ENCODE measurements at regions of chr3 and their contacts with region 1.

Region 1: GRCh38 chr3:13452490-13453335 is 27.4 kb upstream of the HDAC11 start:
- DNase-seq: peak; percentile 61
- ATAC-seq: peak; percentile 25
- H3K4me3 Mint-ChIP-seq: peak overlapping the region; percentile 82
- H3K27ac Mint-ChIP-seq: peak overlapping the region; percentile 89
- H3K4me1 Mint-ChIP-seq: peaks cover 13% of the 10 kb centered on the region
- H3K27me3 Mint-ChIP-seq: no peaks in the 10 kb centered on the region
- CTCF ChIP-seq: peak; percentile 78

Region 2: DNA sequence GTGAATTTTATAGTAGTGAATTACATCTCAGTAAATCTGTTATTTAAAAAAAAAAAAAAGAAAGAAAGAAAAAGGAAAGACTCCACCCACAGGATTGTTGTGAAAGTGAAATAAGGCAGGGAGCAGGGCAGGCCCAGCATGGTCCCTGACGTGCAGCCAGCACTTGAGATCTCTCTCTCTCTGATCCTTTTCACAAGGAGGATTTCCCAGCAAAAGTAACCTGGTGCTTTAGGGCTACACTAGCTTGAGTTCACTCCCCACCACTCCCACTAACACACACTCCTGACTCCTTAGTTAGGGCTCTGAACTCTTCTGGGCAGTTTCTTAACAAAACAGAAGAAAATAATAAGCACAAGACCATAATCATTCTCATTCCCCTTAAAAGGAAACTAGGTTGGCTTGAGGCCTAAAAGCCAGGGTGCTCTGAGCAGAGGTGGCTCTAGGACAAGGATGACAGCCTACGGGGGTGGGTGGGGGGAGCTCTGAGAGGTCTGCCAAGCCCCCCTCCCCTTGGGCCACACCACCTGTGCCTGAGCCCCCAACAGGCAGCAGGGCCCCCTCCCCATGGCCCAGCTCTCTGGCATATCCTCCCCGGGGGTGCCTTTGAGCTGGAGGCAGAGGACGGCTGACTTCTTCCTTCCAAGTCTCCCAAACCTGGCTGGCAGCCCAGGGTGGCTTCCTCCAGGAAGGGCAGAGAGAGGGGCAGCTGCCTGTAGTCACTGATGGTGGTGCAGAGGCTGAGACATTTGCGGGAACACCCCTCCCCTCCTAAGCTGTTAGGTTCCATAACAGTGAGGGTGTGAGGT is 694.5 kb before region 1 on chr3:
- CTCF ChIA-PET with region 1: no interaction called
- POLR2A ChIA-PET with region 1: no interaction called
- intact Hi-C with region 1: no loop called
- DNase-seq: no peak
- ATAC-seq: no peak
- H3K4me3 Mint-ChIP-seq: no peak overlapping the region
- H3K27ac Mint-ChIP-seq: peak overlapping the region; percentile 25
- H3K4me1 Mint-ChIP-seq: peaks cover 9% of the 10 kb centered on the region
- H3K27me3 Mint-ChIP-seq: peaks cover 8% of the 10 kb centered on the region
- CTCF ChIP-seq: no peak

Region 3: DNA sequence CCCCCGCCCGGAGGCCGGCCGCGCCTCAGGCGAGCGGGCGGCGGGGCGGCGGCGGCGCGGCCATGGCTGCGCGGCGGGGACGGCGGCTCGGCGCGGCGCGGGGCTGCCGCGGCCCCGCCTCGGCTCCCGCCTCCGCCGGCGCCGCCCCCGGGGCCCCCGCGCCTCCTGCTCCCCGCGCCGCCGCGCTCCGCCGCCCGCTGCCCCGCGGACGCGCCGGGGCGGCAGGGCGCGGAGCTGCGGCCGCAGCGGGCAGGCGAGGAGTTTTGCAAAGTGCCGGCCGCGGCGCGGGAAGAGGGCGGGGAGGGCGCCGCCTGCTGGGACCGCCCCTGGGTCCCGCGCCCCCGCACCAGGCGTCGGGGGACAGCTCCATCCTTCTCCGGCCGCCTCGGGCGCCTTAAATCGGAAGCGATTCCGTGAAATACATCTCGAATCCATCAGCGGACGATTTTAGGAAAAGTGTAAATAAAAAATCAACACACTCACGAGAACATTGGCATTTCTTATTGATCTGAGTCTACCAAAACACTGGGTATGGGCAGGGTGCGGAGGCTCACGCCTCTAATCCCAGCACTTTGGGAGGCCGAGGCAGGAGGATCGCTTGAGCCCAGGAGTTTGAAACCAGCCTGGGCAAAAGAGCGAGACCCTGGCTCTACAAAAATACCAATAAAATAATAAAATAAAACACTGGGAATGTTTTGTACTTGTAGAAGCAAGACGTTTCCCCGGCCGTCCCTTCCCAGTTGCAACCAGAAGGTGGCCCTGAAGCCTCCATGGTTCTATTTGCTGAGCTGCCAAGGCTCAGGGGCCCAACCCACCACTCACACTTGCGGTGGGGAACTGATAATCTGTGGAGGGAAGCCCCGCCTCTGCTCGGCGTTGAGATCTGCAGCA is 169.5 kb before region 1 on chr3:
- CTCF ChIA-PET with region 1: interaction called, 11 read pairs
- POLR2A ChIA-PET with region 1: no interaction called
- intact Hi-C with region 1: no loop called
- DNase-seq: peak; percentile 28
- ATAC-seq: peak; percentile 71
- H3K4me3 Mint-ChIP-seq: peak overlapping the region; percentile 59
- H3K27ac Mint-ChIP-seq: no peak overlapping the region
- H3K4me1 Mint-ChIP-seq: peaks cover 3% of the 10 kb centered on the region
- H3K27me3 Mint-ChIP-seq: peaks cover 40% of the 10 kb centered on the region
- CTCF ChIP-seq: no peak

Region 4: DNA sequence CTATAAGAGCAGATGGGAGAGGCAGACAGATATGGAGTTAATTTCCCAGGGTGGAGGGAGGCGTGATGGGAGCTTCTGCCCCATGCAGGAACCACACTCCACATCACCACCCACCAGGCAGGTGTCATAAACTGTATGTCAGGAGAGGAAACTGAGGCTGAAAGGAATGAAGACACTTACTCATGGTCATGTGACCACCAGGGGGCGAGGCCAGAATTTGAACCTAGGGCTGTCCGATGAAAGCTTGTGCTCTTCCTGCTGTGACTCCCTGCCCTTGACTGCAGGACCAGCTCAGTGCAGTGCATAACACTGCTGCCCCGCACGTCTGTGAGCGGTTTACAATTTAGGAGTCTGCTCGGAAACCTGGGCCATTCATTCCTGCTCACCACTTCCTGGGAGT is 61.4 kb before region 1 on chr3:
- CTCF ChIA-PET with region 1: interaction called, 35 read pairs
- POLR2A ChIA-PET with region 1: no interaction called
- intact Hi-C with region 1: loop called (anchors 10 kb)
- DNase-seq: peak; percentile 25
- ATAC-seq: no peak
- H3K4me3 Mint-ChIP-seq: no peak overlapping the region
- H3K27ac Mint-ChIP-seq: no peak overlapping the region
- H3K4me1 Mint-ChIP-seq: peaks cover 3% of the 10 kb centered on the region
- H3K27me3 Mint-ChIP-seq: no peaks in the 10 kb centered on the region
- CTCF ChIP-seq: peak; percentile 37

Region 5: GRCh38 chr3:13414040-13414729 is 38.5 kb before region 1 on chr3:
- CTCF ChIA-PET with region 1: interaction called, 125 read pairs
- POLR2A ChIA-PET with region 1: interaction called, 35 read pairs
- intact Hi-C with region 1: no loop called
- DNase-seq: peak; percentile 86
- ATAC-seq: peak; percentile 90
- H3K4me3 Mint-ChIP-seq: peak overlapping the region; percentile 90
- H3K27ac Mint-ChIP-seq: peak overlapping the region; percentile 96
- H3K4me1 Mint-ChIP-seq: peaks cover 48% of the 10 kb centered on the region
- H3K27me3 Mint-ChIP-seq: no peaks in the 10 kb centered on the region
- CTCF ChIP-seq: no peak

Region 6: GRCh38 chr3:13427662-13428603 is 24.8 kb before region 1 on chr3:
- CTCF ChIA-PET with region 1: interaction called, 19 read pairs
- POLR2A ChIA-PET with region 1: interaction called, 4 read pairs
- intact Hi-C with region 1: no loop called
- DNase-seq: peak; percentile 48
- ATAC-seq: peak; percentile 85
- H3K4me3 Mint-ChIP-seq: peak overlapping the region; percentile 20
- H3K27ac Mint-ChIP-seq: peak overlapping the region; percentile 84
- H3K4me1 Mint-ChIP-seq: peaks cover 30% of the 10 kb centered on the region
- H3K27me3 Mint-ChIP-seq: no peaks in the 10 kb centered on the region
- CTCF ChIP-seq: no peak

Region 7: DNA sequence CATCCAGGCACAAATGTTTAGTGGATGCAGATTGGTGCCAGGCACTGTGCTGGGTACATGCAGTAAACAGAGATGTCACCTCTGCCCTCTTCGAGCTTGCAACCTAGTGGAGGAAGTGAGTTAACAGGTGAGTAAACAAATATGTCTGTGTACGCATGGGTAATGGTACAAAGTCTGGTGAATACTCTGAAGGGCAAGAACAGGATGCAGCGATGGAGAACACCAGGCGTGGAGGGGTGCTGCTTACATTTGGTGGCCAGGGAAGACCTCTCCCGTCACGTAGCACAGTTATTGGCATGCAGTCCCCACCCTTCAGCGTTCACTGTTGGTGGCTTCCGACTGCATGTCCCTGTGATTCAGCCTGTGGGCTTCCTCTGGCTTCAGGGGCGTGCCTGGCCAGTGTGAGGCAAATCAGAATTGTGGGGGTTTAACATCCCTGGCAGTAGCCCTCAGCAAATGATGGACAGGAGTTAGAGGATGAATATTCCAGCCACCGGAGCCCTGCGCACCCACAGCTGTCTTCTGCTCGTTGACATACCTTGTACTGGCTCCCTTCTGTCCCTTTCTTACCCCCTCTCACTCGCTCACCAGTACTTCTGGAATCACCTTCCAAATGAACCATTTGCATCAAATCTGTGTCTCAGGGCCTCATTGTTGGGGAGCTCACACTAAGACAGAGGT is 18.3 kb after region 1 on chr3:
- CTCF ChIA-PET with region 1: interaction called, 12 read pairs
- POLR2A ChIA-PET with region 1: no interaction called
- intact Hi-C with region 1: no loop called
- DNase-seq: no peak
- ATAC-seq: no peak
- H3K4me3 Mint-ChIP-seq: no peak overlapping the region
- H3K27ac Mint-ChIP-seq: no peak overlapping the region
- H3K4me1 Mint-ChIP-seq: no peaks in the 10 kb centered on the region
- H3K27me3 Mint-ChIP-seq: no peaks in the 10 kb centered on the region
- CTCF ChIP-seq: no peak

Region 8: DNA sequence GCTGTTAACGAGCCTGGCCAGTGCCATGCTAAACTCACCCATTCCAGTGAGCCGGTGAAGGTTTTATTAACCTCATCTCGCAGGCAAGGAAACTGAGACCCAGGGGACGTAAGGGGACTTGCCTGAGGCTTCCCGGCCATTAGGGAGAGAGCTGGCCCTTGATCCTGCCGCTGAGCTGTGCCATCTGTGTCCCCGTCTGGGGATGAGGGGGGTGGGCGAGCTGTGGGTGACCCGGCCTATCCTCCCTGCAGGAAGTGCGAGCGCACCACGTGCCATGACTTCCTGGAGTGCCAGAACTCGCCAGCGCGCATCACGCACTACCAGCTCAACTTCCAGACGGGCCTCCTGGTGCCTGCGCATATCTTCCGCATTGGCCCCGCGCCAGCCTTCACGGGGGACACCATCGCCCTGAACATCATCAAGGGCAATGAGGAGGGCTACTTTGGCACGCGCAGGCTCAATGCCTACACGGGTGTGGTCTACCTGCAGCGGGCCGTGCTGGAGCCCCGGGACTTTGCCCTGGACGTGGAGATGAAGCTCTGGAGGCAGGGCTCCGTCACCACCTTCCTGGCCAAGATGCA is 184.7 kb after region 1 on chr3:
- CTCF ChIA-PET with region 1: no interaction called
- POLR2A ChIA-PET with region 1: no interaction called
- intact Hi-C with region 1: no loop called
- DNase-seq: no peak
- ATAC-seq: no peak
- H3K4me3 Mint-ChIP-seq: no peak overlapping the region
- H3K27ac Mint-ChIP-seq: no peak overlapping the region
- H3K4me1 Mint-ChIP-seq: no peaks in the 10 kb centered on the region
- H3K27me3 Mint-ChIP-seq: no peaks in the 10 kb centered on the region
- CTCF ChIP-seq: no peak

Region 9: DNA sequence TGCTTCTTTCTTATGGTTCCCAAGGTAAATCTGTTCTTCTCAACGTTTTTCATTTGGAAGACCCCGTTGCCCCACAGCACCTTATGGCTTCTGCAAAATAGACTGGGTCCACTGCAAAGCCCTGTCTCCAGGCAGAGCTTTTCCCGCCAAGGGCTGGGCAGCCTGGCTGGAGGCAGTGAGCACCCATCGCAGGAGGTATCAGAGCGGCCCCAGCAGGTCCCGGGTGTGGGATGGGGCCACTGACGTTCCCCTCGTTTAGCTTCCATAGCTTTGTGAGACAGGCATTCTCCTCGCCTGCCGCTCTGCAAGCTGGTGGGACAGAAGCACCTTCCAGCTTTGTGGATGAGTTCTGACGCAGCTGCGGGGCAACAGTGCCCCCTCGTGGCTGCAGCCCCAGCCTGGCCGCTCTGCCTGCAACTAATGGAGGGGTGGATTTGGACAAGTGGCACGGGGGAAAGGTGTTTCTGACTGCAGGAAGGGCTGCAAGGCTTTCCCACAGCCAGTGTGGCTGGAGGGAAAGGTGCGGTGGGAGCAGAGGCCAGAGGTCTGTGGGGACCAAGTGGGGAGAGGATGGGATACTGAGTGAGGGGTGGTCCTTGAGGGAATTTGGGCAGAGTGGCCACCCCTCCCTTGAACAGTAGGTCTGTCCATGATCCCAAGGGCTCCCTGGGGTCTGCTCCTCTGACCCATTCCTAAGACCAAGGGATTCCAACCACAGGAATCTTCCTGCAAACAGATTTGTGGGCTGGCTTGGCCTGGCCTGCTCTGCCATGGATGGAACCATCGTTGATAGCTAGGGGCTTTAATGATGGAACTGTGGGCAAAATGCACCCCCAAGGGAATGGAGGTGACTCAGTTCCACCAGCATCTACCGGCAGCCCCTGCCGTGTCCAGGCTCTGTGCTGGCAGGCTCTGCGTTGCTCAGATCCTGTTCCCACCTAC is 195.6 kb after region 1 on chr3:
- CTCF ChIA-PET with region 1: interaction called, 28 read pairs
- POLR2A ChIA-PET with region 1: no interaction called
- intact Hi-C with region 1: no loop called
- DNase-seq: peak; percentile 84
- ATAC-seq: peak; percentile 38
- H3K4me3 Mint-ChIP-seq: no peak overlapping the region
- H3K27ac Mint-ChIP-seq: no peak overlapping the region
- H3K4me1 Mint-ChIP-seq: peaks cover 26% of the 10 kb centered on the region
- H3K27me3 Mint-ChIP-seq: peaks cover 16% of the 10 kb centered on the region
- CTCF ChIP-seq: peak; percentile 98

Measured in activated CD8-positive, alpha-beta T cell treated with anti-CD3 and anti-CD28 coated beads for 36 hours (primary cell).